Left ventricle myocardium inferior (tissue), 1 donor: ENCODE measurements at regions of chr3 and their contacts with region 1.

Region 1: GRCh38 chr3:151439652-151440129 is 21.2 kb downstream of the IGSF10 start:
- DNase-seq: no peak
- H3K4me3 ChIP-seq: no peak overlapping the region
- H3K27ac ChIP-seq: no peak overlapping the region
- H3K4me1 ChIP-seq: no peaks in the 10 kb centered on the region
- H3K27me3 ChIP-seq: peaks cover 12% of the 10 kb centered on the region
- CTCF ChIP-seq: peak; percentile 87

Region 2: DNA sequence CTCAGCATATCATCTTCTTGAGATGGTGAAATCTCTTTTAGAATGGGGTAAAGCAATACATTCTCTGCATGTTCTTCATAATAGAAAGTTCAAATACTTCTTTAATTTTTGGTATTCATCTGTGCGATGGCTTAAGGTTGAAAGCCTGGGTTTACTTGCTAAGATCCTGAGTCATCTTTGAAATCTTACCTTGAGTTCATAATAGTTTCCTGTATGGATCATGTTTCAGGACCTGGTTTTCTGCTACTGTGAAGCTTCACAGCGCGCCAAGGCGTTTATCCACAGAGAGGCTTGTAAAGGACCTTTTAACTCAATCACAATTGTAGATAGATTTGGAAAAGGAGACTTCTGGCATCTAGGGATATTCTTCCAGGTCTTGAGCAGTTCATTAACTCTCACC is 315.2 kb before region 1 on chr3:
- intact Hi-C with region 1: no loop called
- DNase-seq: no peak
- H3K4me3 ChIP-seq: no peak overlapping the region
- H3K27ac ChIP-seq: no peak overlapping the region
- H3K4me1 ChIP-seq: no peaks in the 10 kb centered on the region
- H3K27me3 ChIP-seq: no peaks in the 10 kb centered on the region
- CTCF ChIP-seq: no peak

Region 3: GRCh38 chr3:151384741-151385174 is 54.9 kb before region 1 on chr3 and contains the start of gene P2RY12:
- intact Hi-C with region 1: no loop called
- DNase-seq: no peak
- H3K4me3 ChIP-seq: peak within 1 kb of the TSS; percentile 49
- H3K27ac ChIP-seq: peak within 1 kb of the TSS; percentile 2
- H3K4me1 ChIP-seq: no peaks in the 10 kb centered on the region
- H3K27me3 ChIP-seq: no peaks in the 10 kb centered on the region
- CTCF ChIP-seq: no peak
- total RNA-seq, gene P2RY12: 0.74 TPM

Region 4: GRCh38 chr3:151918253-151919029 is 478.8 kb after region 1 on chr3:
- intact Hi-C with region 1: loop called (anchors 5 kb)
- DNase-seq: no peak
- H3K4me3 ChIP-seq: no peak overlapping the region
- H3K27ac ChIP-seq: no peak overlapping the region
- H3K4me1 ChIP-seq: no peaks in the 10 kb centered on the region
- H3K27me3 ChIP-seq: no peaks in the 10 kb centered on the region
- CTCF ChIP-seq: peak; percentile 75